Left cardiac atrium (tissue), 4 donors: ENCODE measurements at regions of chr9 and their contacts with region 1.

Region 1: DNA sequence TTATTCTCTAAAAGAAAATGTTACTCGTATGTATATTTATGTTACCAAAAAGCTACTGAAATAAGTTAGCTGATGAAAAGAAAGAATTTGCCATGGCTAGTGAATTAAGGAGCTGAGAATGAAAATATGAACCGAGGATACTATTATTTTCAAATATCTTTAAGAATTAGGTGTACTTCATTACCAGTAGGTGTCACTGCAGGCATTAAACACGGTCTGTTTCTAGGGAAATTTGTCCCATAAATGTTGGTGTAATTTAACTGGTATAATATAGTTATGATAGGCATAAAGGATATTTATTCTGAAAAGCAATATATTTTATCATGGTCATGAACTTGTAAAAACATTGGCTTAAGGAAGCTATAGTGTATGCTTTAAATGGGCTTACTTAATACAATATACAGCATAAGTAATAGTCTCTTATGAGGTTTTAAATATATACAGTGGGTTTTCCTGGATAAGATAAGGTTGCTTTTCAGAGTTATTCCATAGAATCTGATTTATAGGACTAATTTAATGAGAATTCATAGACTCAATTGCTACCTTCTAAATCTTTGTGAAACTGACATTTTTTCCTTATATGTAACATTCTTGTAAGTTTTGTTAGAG is 72.4 kb upstream of the MPDZ start:
- DNase-seq: no peak
- ATAC-seq: peak; percentile 34 to 38

Region 2: DNA sequence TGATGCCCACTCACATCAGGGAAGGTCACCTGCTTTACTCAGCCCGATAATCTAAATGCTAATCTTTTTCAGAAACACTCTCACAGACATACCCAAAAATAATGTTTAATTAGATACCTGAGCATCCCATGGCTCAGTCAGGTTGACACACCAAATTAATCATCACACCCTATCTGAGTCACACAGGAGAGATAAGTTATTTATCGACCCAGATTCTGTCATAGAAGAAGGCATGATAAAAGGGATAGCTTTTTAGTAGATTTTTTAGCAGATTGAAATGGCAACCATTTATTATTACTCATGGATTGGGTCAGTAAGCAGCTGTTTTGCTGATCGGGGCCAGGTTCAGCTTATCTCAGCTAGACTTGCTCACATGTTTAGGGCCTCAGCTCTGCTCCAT is 756.5 kb before region 1 on chr9:
- intact Hi-C with region 1: no loop called
- DNase-seq: no peak
- ATAC-seq: no peak

Region 3: GRCh38 chr9:13410566-13411031 is 58.7 kb after region 1 on chr9:
- intact Hi-C with region 1: loop called in 1 of 2 experiments (anchors 10 kb)
- DNase-seq: no peak
- ATAC-seq: peak in 1 of 2 donors; percentile 18

Region 4: GRCh38 chr9:13485068-13485596 is 133.2 kb after region 1 on chr9:
- intact Hi-C with region 1: no loop called
- DNase-seq: peak; percentile 66
- ATAC-seq: peak; percentile 97 to 98

Region 5: GRCh38 chr9:13841746-13842462 is 490.0 kb after region 1 on chr9:
- intact Hi-C with region 1: no loop called
- DNase-seq: no peak
- ATAC-seq: peak; percentile 78 to 90

Region 6: DNA sequence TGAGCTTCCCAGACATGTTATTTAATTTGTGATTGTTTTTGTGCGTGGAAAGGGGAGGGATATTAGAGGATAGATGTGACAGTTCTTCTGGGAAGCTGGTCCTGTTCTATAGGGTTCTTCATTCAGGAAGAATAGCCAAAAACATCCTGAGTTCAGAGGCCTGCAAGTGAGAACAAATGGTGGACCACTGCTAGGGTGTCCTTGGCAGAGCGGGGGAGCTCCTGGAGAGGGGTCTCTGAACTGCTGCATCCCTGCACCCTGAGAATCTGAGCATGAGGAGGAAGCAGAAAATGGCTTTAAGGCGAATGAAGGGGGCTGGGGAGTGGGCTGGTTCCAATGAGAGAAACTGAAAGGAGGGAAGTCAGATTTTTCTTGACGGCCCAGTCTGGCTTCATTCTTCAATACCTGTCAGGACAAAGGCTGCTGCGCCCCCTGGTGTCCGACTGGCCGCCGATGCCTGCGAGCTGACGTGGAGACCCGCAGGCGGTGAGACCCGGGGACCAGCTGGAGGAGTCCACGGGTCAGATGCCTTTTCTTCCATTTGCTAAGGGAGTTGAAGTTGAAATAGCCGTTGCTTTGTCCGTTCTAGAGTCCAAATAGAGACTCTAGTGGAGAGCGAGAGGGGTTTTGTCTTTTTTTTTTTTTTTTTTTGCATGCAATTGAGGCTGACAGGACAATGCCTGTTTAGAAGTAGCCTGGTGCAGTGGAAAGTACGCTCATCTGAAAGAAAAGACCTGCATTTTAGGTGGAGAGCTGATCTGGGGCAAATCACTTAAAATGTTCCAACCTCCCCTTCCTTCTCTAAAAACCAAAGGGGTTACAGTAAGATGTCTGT is 1001.6 kb after region 1 on chr9:
- intact Hi-C with region 1: loop called in 1 of 2 experiments (anchors 10 kb)
- DNase-seq: peak; percentile 95
- ATAC-seq: peak; percentile 76

Region 7: DNA sequence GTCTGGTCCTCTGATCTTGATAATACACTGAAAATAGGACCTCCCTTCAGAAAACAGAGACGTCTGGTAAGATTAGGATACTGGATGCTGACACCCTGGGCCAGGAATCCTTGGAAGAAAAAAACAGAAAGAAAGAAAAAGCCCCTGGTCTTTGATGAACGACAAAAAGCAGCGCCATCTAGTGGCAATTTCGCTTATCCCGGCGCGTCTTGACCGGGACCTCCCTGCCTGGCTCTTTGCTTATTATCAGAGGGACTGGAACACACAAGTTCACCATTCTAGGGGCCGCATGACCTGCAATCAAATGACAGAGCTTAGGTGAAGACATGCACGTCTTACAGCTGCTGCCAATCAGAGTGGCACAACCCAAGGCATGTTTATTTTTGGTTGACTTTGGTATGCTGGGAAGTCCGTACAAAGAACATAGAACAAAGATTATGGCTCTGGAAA is 1076.9 kb after region 1 on chr9:
- intact Hi-C with region 1: loop called in 1 of 2 experiments (anchors 5 kb)
- DNase-seq: peak; percentile 80
- ATAC-seq: peak; percentile 56 to 59

Region 8: GRCh38 chr9:14768405-14769229 is 1416.7 kb after region 1 on chr9:
- intact Hi-C with region 1: loop called in 1 of 2 experiments (anchors 5 kb)
- DNase-seq: no peak
- ATAC-seq: peak; percentile 23 to 44